B cell (primary cell): ENCODE measurements at regions of chr6 and their contacts with region 1.

Region 1: GRCh38 chr6:152982768-152983636 is at the start of gene FBXO5:
- DNase-seq: peak; percentile 98
- ATAC-seq: peak; percentile 93
- H3K4me3 ChIP-seq: peak within 1 kb of the TSS; percentile 60 to 91 (median 81)
- H3K4me3 Mint-ChIP-seq: peak within 1 kb of the TSS; percentile 96
- H3K27ac ChIP-seq: peak within 1 kb of the TSS; percentile 85 to 86
- H3K27ac Mint-ChIP-seq: peak within 1 kb of the TSS; percentile 96
- H3K4me1 ChIP-seq: peaks cover 22 to 32% of the 10 kb centered on the region in 2 donors
- H3K4me1 Mint-ChIP-seq: peaks cover 39% of the 10 kb centered on the region
- H3K27me3 ChIP-seq: no peaks in the 10 kb centered on the region
- H3K27me3 Mint-ChIP-seq: no peaks in the 10 kb centered on the region
- CTCF ChIP-seq: no peak
- total RNA-seq, gene FBXO5: 14.1 and 14.6 TPM in 2 replicates

Region 2: GRCh38 chr6:153002607-153003365 is 19.8 kb after region 1 on chr6 and contains the start of gene MTRF1L:
- CTCF ChIA-PET with region 1: interaction called, 5 read pairs
- POLR2A ChIA-PET with region 1: no interaction called
- intact Hi-C with region 1: loop called (anchors 2 kb)
- DNase-seq: peak; percentile 91
- ATAC-seq: peak; percentile 86
- H3K4me3 ChIP-seq: peak within 1 kb of the TSS; percentile 71 to 94 (median 82)
- H3K4me3 Mint-ChIP-seq: peak within 1 kb of the TSS; percentile 100
- H3K27ac ChIP-seq: peak within 1 kb of the TSS; percentile 72 to 89
- H3K27ac Mint-ChIP-seq: peak within 1 kb of the TSS; percentile 96
- H3K4me1 ChIP-seq: peaks cover 20 to 25% of the 10 kb centered on the region in 2 donors
- H3K4me1 Mint-ChIP-seq: peaks cover 41% of the 10 kb centered on the region
- H3K27me3 ChIP-seq: no peaks in the 10 kb centered on the region
- H3K27me3 Mint-ChIP-seq: no peaks in the 10 kb centered on the region
- CTCF ChIP-seq: no peak
- total RNA-seq, gene MTRF1L: 23.0 and 24.0 TPM in 2 replicates